ENCODE measurements at regions of chr7 and their contacts with region 1.

Region 1: DNA sequence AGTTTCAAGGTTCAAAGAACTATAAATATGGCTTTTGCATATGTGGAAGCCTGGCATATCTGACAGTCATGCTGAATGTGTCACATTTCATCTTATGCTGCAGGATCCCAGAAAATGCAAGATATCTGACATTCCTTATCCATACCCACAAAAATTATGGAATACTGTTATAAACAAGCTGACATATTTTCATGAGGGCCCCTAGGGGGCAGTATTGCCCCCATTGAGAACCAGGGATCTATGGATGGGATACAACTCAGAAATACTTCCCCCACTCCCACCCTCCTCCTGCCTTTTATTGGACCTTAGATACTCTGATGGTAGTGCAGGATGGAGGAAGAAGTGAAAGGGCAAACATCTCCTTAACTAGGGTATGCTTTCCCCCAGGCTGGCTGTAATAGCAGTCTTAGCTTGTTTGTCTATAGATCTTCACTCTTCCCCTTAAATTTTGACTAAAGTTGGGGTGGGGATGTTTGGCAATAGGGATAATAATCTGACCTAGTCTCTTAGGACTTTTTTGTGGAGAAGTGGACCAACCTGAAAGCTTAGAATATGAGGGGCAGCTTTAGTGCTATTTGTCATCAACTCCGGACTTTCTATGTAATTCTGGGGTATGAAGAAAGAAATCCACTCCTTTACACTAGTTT is 3.5 kb upstream of the GNGT1 start:
- DNase-seq: no peak
- ATAC-seq: no peak

Region 2: DNA sequence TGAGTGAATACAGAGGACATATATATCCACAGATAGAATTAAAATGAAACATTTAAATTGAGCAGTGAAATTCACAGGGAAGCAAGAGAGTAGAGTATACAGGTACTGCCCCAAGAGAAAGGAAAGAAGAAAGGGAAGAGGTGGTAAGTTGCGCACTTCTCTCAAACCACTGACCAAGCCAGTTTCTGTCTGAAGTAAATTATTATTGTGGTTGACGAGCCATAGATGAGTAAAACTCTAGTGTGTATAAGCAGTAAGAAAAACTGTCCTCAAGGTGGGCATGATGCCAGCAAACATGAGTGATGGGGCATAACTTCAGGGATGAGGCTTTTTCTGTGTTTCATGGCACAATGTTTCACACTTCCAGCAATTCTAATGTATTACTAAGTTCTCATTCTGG is 105.6 kb after region 1 on chr7:
- intact Hi-C with region 1: loop called in 1 of 2 experiments (anchors 5 kb)
- DNase-seq: no peak
- ATAC-seq: no peak

Region 3: DNA sequence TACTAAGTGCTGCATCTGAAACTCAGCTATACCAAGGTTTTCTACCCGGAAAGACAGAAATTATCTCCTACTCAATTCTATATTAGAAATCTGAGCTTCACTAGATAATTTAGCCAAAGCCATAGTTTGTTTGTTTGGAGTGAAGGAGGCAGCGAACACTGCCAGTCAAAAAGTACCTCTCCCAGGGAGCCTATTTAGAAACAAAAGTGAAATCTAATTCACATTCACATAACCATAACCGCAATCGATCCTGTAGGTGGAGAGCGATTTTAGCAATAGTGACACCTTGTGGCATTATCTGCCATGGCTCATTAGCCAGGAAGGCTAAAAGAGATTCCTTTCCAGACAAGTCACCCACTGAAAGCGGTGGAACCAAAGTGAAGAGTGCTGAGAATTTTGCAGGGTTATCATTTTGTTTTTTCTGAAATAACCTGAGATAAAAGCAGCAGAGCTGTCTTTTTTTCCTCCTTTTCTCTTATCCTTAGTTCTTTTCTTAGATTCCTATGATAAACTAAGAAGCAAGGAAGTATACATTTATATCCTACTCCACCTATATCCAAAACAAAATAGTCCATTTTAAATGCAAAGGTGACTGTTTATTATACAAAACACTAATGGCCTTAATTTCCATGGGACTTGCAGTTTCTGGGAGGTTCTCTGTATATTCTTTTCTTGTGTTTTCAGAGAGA is 184.9 kb after region 1 on chr7:
- intact Hi-C with region 1: loop called in 1 of 2 experiments (anchors 5 kb)
- DNase-seq: peak in 1 of 2 donors; percentile 17
- ATAC-seq: peak; percentile 74

Region 4: DNA sequence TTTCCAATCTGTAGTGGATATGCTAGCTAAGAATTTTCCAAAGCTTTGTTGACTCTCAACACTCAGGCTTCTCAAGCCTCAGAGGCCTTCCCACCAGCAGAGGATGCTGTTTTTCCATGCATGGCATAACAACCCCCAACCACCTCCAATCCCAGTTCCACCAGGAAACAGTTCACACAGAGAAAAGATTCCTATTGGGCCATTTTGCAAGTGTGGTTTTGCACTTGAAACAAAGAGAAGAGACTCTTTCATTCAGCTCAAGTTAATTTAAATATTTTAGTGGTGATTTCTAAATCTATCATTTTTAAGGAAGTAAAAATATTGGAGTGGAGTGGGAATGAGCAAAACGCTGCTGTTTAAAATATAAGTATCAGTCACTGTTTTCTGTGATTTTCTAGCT is 386.2 kb after region 1 on chr7:
- intact Hi-C with region 1: loop called in 1 of 2 experiments (anchors 10 kb)
- DNase-seq: peak in 1 of 2 donors; percentile 36
- ATAC-seq: peak; percentile 69

Measured in left colon (tissue), 2 donors.